ENCODE measurements at regions of chr14 and their contacts with region 1.

Region 1: DNA sequence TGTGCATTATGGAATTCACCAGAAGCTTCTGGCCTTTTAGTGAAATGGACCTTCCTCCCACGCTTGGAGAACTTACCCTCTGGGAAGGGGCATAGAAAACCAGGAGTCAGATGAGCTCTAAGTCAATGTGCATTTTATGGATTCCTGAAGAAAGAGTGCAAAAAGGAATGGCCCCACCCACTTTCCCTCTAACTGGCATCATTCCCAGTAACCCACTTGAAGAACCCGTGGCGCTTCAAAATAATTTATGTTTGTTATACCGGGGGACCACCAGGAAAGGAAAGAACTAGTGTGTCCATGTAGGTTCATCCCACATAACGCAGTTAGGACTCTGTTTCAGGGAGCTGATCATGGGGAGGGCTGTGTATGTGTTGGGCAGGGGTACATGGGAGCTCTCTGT is 1153.4 kb downstream of the TMEM121 start:
- DNase-seq: no peak
- H3K4me3 ChIP-seq: no peak overlapping the region
- H3K27ac ChIP-seq: no peak overlapping the region
- H3K4me1 ChIP-seq: no peaks in the 10 kb centered on the region
- H3K27me3 ChIP-seq: peaks cover under 1% of the 10 kb centered on the region
- CTCF ChIP-seq: no peak
- EP300 ChIP-seq: no peak
- POLR2A ChIP-seq: no peak

Region 2: GRCh38 chr14:106599209-106599608 is 80.6 kb before region 1 on chr14:
- in situ Hi-C with region 1: loop called in 1 of 4 experiments (anchors 5 kb)
- intact Hi-C with region 1: no loop called
- DNase-seq: no peak
- H3K4me3 ChIP-seq: no peak overlapping the region
- H3K27ac ChIP-seq: no peak overlapping the region
- H3K4me1 ChIP-seq: no peaks in the 10 kb centered on the region
- H3K27me3 ChIP-seq: peaks cover 20% of the 10 kb centered on the region
- CTCF ChIP-seq: no peak
- EP300 ChIP-seq: no peak
- POLR2A ChIP-seq: no peak

Region 3: DNA sequence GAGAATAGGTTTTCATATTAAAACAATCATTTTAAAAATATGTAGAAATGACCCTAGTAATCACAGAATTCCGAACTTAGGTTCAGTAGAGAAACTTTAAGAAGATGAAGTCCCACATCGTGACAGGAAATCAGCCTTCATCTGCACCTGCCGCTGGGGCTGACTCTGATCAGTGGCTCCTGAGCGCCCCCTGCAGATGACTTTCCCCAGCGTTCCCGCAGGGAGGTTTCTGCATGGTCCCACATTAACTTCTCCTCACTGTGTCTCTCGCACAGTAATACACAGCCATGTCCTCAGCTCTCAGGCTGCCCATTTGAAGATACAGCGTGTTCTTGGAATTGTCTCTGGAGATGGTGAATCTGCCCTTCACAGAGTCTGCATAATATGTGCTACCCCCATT is 22.3 kb before region 1 on chr14:
- in situ Hi-C with region 1: no loop called
- intact Hi-C with region 1: no loop called
- DNase-seq: peak; percentile 46
- H3K4me3 ChIP-seq: no peak overlapping the region
- H3K27ac ChIP-seq: no peak overlapping the region
- H3K4me1 ChIP-seq: no peaks in the 10 kb centered on the region
- H3K27me3 ChIP-seq: peaks cover 9% of the 10 kb centered on the region
- CTCF ChIP-seq: peak in 2 of 5 experiments; percentile 14 to 28
- EP300 ChIP-seq: no peak
- POLR2A ChIP-seq: no peak

Region 4: GRCh38 chr14:106691601-106692291 is 12.0 kb after region 1 on chr14:
- in situ Hi-C with region 1: no loop called
- intact Hi-C with region 1: no loop called
- DNase-seq: peak; percentile 47
- H3K4me3 ChIP-seq: no peak overlapping the region
- H3K27ac ChIP-seq: no peak overlapping the region
- H3K4me1 ChIP-seq: no peaks in the 10 kb centered on the region
- H3K27me3 ChIP-seq: peaks cover 4% of the 10 kb centered on the region
- CTCF ChIP-seq: peak in 3 of 5 experiments; percentile 10 to 16 (median 10)
- EP300 ChIP-seq: no peak
- POLR2A ChIP-seq: no peak

Measured in transverse colon (tissue), 4 donors.